Activated CD8-positive, alpha-beta T cell treated with anti-CD3 and anti-CD28 coated beads for 36 hours (primary cell): ENCODE measurements at regions of chr17 and their contacts with region 1.

Region 1: GRCh38 chr17:58112970-58113631 is 29.9 kb downstream of the DYNLL2 start:
- DNase-seq: peak; percentile 92
- ATAC-seq: peak; percentile 99
- H3K4me3 Mint-ChIP-seq: no peak overlapping the region
- H3K27ac Mint-ChIP-seq: no peak overlapping the region
- H3K4me1 Mint-ChIP-seq: no peaks in the 10 kb centered on the region
- H3K27me3 Mint-ChIP-seq: peaks cover 3% of the 10 kb centered on the region
- CTCF ChIP-seq: peak; percentile 89

Region 2: GRCh38 chr17:57855391-57856035 is 257.6 kb before region 1 on chr17:
- CTCF ChIA-PET with region 1: interaction called, 69 read pairs
- POLR2A ChIA-PET with region 1: interaction called, 6 read pairs
- intact Hi-C with region 1: loop called (anchors 5 kb)
- DNase-seq: no peak
- ATAC-seq: no peak
- H3K4me3 Mint-ChIP-seq: no peak overlapping the region
- H3K27ac Mint-ChIP-seq: no peak overlapping the region
- H3K4me1 Mint-ChIP-seq: peaks cover 13% of the 10 kb centered on the region
- H3K27me3 Mint-ChIP-seq: peaks cover 14% of the 10 kb centered on the region
- CTCF ChIP-seq: no peak

Region 3: DNA sequence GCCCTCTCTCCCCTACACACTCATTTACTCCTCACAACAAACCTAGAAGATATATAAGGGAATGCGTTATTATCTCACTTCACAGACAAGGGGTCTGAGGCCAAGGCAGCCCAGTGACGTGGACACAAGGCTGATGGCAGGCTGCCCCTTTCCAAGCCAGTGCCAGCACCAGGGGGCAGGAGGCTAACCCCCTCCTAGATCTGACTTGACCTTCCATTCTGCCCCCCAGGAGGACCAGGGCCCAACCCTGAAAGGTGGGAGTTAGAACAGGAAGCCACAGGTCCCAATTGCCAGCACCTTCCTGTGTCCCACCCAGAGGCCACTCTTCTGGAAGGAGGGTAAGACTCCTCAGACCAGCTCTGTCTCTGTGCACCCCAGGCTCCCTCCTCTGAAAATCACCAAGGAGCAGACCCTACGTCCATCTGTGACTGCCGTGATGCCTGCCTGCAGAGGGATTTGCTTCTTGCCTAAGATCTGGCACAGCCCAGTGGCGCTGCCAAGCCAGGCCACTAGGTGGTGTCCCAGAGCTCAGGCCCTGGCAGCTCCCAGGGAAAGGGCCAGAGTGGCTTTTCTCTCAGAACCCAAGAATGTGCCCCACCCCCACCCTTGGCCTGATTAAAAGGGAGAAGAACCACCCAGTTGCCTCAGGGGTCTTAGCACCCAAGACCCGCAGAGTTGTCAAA is 220.8 kb before region 1 on chr17:
- CTCF ChIA-PET with region 1: interaction called, 11 read pairs
- POLR2A ChIA-PET with region 1: no interaction called
- intact Hi-C with region 1: no loop called
- DNase-seq: peak; percentile 88
- ATAC-seq: peak; percentile 99
- H3K4me3 Mint-ChIP-seq: no peak overlapping the region
- H3K27ac Mint-ChIP-seq: no peak overlapping the region
- H3K4me1 Mint-ChIP-seq: no peaks in the 10 kb centered on the region
- H3K27me3 Mint-ChIP-seq: peaks cover 2% of the 10 kb centered on the region
- CTCF ChIP-seq: peak; percentile 87

Region 4: DNA sequence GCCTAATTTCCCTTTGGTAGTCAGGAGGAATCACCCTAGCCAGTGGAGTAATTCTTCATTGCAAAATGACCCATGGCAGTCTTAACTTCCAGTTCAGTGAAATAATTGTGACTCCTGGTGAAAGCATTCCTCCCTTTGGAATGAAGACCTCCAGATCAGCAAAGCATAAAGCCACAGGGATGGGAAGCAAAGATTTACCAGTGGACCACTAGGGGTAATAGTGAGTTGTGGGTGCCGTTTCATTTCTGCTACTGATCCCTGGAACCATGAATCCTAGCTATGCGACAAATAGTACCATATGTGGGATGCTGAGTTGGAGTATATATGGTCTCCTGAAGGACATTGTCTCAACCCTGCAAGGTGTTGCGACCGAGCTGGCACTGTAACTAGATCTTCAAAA is 16.2 kb before region 1 on chr17:
- CTCF ChIA-PET with region 1: interaction called, 13 read pairs
- POLR2A ChIA-PET with region 1: no interaction called
- intact Hi-C with region 1: no loop called
- DNase-seq: no peak
- ATAC-seq: no peak
- H3K4me3 Mint-ChIP-seq: no peak overlapping the region
- H3K27ac Mint-ChIP-seq: no peak overlapping the region
- H3K4me1 Mint-ChIP-seq: peaks cover 7% of the 10 kb centered on the region
- H3K27me3 Mint-ChIP-seq: no peaks in the 10 kb centered on the region
- CTCF ChIP-seq: no peak

Region 5: DNA sequence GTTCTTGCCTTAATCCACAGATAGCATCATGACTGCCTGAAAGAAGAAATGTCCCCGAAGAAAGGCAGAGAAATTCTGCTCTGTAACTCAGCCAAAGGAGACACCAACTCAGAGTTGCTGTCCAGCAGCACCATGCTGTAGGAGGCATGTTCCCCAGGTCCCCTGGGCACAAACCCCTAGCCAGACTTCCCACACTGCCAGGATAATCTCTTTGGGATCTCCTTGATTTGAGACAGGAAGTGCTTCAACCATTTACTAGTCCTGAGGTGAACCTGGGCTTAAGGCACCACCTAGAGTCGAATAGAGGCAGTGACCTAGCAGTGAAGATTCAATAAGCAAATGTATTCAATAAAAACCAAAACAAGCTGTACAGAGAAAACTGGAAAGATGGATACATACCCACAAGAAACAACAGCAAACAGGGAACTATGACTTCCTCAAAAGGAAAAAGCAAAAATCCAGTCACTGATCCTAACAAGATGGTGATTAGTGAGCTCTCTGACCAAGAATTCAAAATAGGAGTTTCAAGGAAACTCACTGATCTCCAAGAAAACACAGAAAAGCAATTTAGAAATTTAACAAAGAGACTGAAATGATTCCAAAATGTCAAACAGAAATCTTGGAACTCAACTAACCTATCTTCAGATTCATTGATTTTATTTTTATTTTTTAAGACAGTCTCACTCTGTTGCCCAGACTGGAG is 59.4 kb after region 1 on chr17:
- CTCF ChIA-PET with region 1: interaction called, 21 read pairs
- POLR2A ChIA-PET with region 1: no interaction called
- intact Hi-C with region 1: loop called (anchors 2 kb)
- DNase-seq: peak; percentile 69
- ATAC-seq: peak; percentile 96
- H3K4me3 Mint-ChIP-seq: no peak overlapping the region
- H3K27ac Mint-ChIP-seq: peak overlapping the region; percentile 49
- H3K4me1 Mint-ChIP-seq: peaks cover 39% of the 10 kb centered on the region
- H3K27me3 Mint-ChIP-seq: no peaks in the 10 kb centered on the region
- CTCF ChIP-seq: peak; percentile 79